Pancreas (tissue), 10 donors: ENCODE measurements at regions of chr14 and their contacts with region 1.

Region 1: DNA sequence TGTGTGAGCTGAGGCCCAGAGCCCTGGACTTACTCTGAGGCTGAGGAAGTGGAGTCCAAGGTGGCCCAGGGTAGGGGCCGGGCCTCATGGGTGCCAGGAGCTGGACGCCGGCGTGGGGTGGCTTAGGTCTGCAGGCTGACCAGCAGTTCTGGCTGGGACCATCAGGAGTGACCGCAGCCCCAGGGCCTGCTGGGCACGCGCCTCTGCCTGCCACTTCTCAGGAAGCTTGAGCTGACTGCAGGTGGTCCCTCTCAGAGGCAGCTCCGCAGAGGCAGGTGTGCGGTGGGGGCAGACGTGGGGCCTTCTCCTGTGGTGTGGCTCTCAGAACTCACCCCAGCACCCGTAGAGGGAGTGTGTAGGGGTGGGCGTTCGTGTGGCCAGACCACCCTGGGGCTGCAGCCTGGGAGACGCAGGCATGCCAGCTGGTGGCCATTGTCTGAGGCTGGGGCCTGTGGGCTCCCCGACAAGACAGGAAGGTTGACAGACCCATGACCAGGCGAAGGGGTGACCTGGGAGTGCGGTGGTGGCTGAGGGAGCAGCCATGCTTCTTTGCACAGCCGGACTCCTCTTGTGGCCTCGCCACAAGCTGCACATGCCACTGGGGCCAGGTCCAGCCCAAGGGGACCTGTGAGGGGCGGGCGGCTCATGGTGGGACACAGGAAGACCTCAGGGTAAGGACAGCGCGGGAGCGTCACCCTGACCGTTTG is 40.0 kb upstream of the TEX22 start:
- DNase-seq: peak in 2 of 6 donors; percentile 17 to 55
- ATAC-seq: peak in 1 of 4 donors; percentile 11
- H3K4me3 ChIP-seq: no peak overlapping the region
- H3K27ac ChIP-seq: no peak overlapping the region
- H3K4me1 ChIP-seq: no peaks in the 10 kb centered on the region
- H3K27me3 ChIP-seq: no peaks in the 10 kb centered on the region
- CTCF ChIP-seq: no peak

Region 2: GRCh38 chr14:105144666-105145380 is 213.5 kb before region 1 on chr14:
- intact Hi-C with region 1: no loop called
- DNase-seq: peak in 2 of 6 donors; percentile 53 to 77
- ATAC-seq: no peak
- H3K4me3 ChIP-seq: no peak overlapping the region
- H3K27ac ChIP-seq: no peak overlapping the region
- H3K4me1 ChIP-seq: no peaks in the 10 kb centered on the region
- H3K27me3 ChIP-seq: no peaks in the 10 kb centered on the region
- CTCF ChIP-seq: no peak

Region 3: GRCh38 chr14:105203057-105203531 is 155.2 kb before region 1 on chr14:
- intact Hi-C with region 1: loop called in 2 of 3 experiments (anchors 5 kb)
- DNase-seq: peak; percentile 67 to 94 (median 84)
- ATAC-seq: peak; percentile 47 to 68 (median 53)
- H3K4me3 ChIP-seq: no peak overlapping the region
- H3K27ac ChIP-seq: no peak overlapping the region
- H3K4me1 ChIP-seq: peaks cover 14 to 25% (median 21%) of the 10 kb centered on the region in 3 donors
- H3K27me3 ChIP-seq: peaks cover 0 to 2% (median 0%) of the 10 kb centered on the region in 4 donors
- CTCF ChIP-seq: peak; percentile 77 to 96 (median 93)